ENCODE measurements at regions of chr1 and their contacts with region 1.

Region 1: DNA sequence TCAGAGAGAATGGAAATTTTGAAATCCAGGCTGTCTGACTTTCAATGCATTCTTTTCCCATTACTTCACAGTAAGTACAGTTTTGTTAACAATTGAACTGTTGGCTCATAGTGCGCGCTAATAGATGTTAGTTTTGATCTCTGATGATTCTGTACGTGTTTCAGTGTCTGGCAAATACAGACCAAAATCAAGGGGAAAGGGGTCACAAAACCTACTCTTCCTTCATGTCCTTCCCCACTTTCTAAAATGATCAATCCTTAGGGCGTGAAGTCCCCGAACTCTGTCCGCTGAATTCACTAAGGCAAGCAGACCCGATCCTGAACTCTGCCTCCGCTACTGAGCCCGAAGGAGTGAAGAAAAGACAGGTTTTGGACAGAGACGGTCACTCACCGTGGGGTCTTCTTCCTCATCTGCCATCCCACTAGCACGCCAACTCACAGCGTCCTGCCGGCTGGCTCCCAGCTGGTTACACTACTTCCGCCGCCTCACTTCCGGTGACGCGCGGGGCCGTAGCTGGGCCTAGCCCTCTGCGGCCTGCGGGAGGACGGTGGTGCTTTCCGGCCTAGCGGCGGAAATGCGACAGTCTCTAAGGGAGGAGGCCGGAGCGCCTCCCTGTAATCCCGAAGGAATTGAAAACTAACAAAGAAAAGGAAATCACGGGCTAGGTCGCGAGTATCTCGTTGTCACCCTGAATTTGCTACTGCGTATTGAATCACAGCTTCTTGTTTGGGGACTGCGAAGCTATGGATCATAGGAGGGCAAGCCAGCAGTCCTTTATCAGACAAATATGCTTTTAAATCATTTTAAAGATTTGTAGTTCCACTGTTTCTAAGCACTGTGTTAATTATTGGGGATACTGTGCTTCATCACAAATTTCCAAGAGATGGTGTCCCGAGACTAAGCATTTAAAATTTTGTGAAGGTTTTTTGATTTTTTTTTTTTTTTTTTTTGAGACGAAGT is at the start of gene TAF13:
- DNase-seq: peak; percentile 91
- H3K4me3 ChIP-seq: peak within 1 kb of the TSS; percentile 100
- H3K27ac ChIP-seq: peak within 1 kb of the TSS; percentile 99
- H3K27me3 ChIP-seq: no peaks in the 10 kb centered on the region
- CTCF ChIP-seq: peak; percentile 41; the same call in 1 of the 2 replicates
- polyA plus RNA-seq, gene TAF13: 61.8 and 81.9 TPM in 2 replicates

Region 2: DNA sequence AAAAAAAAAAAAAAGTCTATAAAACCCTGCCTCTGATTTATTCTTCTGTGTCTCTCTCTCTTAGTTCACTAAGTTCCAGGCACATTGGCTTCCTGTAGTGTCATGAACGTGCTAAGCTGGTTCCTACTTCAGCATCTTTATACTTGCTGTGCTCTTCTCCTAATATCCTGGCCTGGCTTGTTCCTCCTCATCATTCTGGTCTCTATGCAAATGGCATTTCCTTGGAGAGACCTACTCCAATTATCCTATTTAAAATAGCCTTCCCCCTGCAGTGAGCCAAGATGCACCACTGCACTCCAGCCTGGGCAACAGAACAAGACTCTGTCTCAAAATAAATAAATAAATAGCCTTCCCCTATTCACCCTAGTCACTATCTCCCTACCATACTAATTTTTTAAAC is 102.9 kb before region 1 on chr1:
- CTCF ChIA-PET with region 1: no interaction called
- POLR2A ChIA-PET with region 1: no interaction called
- DNase-seq: no peak
- H3K4me3 ChIP-seq: no peak overlapping the region
- H3K27ac ChIP-seq: no peak overlapping the region
- H3K27me3 ChIP-seq: no peaks in the 10 kb centered on the region
- CTCF ChIP-seq: no peak

Region 3: DNA sequence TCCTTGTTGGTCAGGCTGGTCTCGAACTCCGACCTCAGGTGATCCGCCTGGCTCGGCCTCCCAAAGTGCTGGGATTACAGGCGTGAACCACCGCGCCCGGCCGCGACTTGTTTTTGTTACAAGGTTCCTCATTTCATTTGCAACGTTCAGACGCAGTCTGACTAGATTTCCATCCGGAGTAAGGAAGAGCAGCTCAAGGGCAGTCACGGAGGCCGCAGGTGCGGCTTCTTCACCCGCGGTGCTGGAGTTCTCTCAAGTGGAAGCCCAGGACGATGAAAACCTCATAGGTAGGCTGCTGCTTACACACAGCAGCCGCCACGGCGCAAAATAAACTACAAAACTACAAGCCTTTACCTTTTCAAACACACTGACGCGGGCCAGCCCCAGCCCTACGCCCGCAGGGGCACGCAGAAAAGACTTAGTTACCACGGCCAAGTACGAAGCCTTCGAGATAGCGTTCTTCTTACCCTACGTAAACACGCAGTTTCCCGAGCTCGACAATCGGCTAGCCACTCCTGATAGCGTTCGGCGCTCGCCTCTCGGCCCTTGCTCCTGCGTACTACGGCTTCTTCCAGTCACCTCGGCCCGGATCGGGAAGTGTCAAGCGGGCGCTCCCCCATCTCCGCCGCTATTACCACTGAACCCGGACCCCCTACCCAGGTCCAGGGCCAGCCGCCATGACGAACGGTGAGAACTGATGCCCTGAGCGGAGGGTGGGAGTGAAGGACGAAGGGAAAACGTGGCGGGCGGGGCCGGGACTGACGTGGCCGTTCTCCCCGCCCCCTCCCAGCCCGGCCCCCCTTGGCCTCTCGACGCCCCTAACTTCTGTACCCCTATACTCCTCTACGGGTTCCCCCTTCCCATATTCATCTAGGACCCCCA is 14.6 kb after region 1 on chr1 and contains the start of gene TMEM167B:
- CTCF ChIA-PET with region 1: interaction called, 3 read pairs
- POLR2A ChIA-PET with region 1: interaction called, 10 read pairs
- DNase-seq: peak; percentile 79
- H3K4me3 ChIP-seq: peak within 1 kb of the TSS; percentile 92
- H3K27ac ChIP-seq: peak within 1 kb of the TSS; percentile 99
- H3K27me3 ChIP-seq: no peaks in the 10 kb centered on the region
- CTCF ChIP-seq: no peak
- polyA plus RNA-seq, gene TMEM167B: 38.8 and 39.0 TPM in 2 replicates

Region 4: DNA sequence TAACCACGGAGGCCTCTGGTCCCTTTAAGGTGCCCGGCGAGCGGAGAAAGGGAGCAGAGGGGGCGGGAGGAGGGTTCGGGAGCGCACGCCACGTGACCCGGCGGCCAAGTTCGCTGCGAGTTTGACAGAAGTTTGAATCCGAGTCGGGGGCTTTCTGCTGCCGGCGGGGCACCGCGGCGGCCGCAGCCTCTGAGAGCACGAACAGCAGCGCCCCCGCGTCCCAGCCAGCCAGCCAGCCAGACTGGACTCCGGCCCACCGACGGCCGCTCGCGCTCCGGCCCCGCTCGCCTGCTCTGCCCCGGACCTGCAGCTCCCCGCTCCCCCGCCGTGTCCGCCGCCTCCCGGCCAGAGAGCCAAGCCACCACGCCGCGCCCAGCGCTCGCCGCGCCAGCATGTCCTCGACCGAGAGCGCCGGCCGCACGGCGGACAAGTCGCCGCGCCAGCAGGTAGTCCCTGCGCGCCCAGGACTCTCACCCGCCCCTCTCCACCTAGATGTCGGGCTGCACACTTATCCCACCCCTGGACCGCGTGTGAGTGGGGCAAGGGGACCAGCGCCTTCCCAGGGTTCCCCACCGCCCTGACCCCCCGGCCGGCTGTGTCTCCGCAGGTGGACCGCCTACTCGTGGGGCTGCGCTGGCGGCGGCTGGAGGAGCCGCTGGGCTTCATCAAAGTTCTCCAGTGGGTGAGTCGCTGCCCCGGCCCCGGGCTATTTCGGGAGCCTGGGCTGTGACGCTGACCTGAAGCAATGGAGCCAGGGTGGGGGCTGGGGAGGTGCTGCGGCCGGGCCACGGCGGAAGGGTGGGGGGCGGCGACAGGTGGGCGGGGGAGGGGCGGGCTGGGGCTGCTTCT is 390.9 kb after region 1 on chr1 and contains the start of gene SYPL2:
- CTCF ChIA-PET with region 1: no interaction called
- POLR2A ChIA-PET with region 1: interaction called, 10 read pairs
- DNase-seq: no peak
- H3K4me3 ChIP-seq: peak within 1 kb of the TSS; percentile 55
- H3K27ac ChIP-seq: no peak within 1 kb of the TSS
- H3K27me3 ChIP-seq: peaks cover 68% of the 10 kb centered on the region
- CTCF ChIP-seq: no peak
- polyA plus RNA-seq, gene SYPL2: 0.26 and 0.40 TPM in 2 replicates

Measured in AG04450 (cell line).